ENCODE measurements at regions of chr20 and their contacts with region 1.

Region 1: DNA sequence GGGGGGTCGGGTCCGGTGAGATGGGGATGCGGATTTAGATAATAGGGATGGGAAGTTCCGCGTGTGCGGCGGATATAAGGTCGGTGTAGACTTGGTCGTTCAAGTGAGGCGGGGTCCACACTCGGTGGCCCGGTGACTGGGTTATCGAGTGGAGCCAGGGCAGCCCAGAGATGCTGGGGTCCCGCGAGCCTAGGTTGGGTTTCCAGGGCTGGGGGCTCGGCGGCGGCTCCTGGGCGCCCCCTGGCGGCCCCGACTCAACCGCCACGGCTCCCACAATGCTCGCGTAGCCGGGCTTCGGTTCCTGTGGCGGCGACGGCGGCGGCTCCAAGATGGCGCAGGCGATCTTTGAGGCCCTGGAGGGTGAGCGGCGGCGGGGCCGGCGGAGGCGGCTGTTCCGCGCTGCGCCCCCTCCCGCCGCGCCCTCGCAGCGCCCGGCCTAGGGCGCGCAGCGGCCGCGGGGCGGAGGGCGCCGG is at the start of gene ZNF341:
- DNase-seq: peak; percentile 76 to 95 (median 85)
- ATAC-seq: peak; percentile 80 to 88 (median 86)
- H3K4me3 ChIP-seq: peak within 1 kb of the TSS; percentile 57 to 62
- H3K4me3 Mint-ChIP-seq: peak within 1 kb of the TSS; percentile 89 to 90 (median 90)
- H3K27ac ChIP-seq: peak within 1 kb of the TSS; percentile 72
- H3K27ac Mint-ChIP-seq: peak within 1 kb of the TSS; percentile 94 to 96
- H3K4me1 ChIP-seq: peaks cover 5 to 26% of the 10 kb centered on the region in 2 experiments
- H3K4me1 Mint-ChIP-seq: peaks cover 25 to 26% (median 26%) of the 10 kb centered on the region in 3 donors
- H3K27me3 ChIP-seq: no peaks in the 10 kb centered on the region
- H3K27me3 Mint-ChIP-seq: no peaks in the 10 kb centered on the region
- total RNA-seq, gene ZNF341: 4.0 to 6.1 (median 5.6) TPM

Region 2: DNA sequence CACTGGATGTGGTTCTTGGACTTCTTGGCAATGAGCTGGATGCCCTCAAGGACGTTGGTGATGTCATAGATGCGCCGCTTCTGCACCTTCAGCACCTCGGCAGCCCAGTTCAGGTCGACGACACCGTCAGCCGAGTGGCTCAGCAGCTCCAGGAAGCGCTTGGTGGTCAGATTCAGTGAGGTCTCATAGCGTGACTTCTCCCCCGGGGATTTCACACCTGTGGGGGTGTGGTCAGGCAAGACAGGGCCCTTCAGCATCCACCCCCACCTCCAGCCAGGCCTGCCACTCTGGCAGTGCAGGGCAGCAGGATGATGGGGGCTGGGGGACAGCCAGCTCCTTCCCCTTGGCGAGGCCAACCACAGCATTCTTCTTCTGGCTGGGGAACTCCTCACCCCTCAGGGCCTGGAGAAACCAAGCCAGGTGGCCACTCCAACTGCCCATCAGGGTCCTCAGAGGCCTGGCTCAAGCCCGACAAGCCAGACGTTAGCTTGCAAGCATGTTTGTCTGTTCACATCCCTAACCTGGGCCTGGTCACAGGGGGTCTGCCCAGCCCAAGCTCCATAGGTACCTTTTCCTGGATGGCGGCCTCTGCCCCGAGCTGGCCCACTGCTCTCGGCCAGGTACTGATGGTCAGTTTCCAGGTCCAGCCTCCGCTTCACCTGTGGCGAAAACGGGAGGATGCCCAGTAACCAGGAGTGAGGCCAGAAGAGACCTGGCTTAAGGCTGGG is 51.8 kb before region 1 on chr20:
- CTCF ChIA-PET with region 1: no interaction called
- POLR2A ChIA-PET with region 1: no interaction called
- DNase-seq: peak in 18 of 35 experiments; percentile 11 to 72 (median 26)
- ATAC-seq: peak; percentile 43 to 72 (median 64)
- H3K4me3 ChIP-seq: no peak overlapping the region
- H3K4me3 Mint-ChIP-seq: peak overlapping the region in 1 of 3 donors; percentile 61
- H3K27ac ChIP-seq: peak overlapping the region; percentile 39
- H3K27ac Mint-ChIP-seq: peak overlapping the region; percentile 89 to 93
- H3K4me1 ChIP-seq: peaks cover 23 to 46% of the 10 kb centered on the region in 2 experiments
- H3K4me1 Mint-ChIP-seq: peaks cover 36 to 52% (median 48%) of the 10 kb centered on the region in 3 donors
- H3K27me3 ChIP-seq: no peaks in the 10 kb centered on the region
- H3K27me3 Mint-ChIP-seq: no peaks in the 10 kb centered on the region

Region 3: GRCh38 chr20:33719989-33720709 is 11.6 kb before region 1 on chr20 and contains the start of gene PXMP4:
- CTCF ChIA-PET with region 1: interaction called in 1 of 2 experiments, 12 read pairs
- POLR2A ChIA-PET with region 1: interaction called, 3 read pairs
- DNase-seq: peak; percentile 68 to 96 (median 87)
- ATAC-seq: peak; percentile 96 to 98 (median 97)
- H3K4me3 ChIP-seq: peak within 1 kb of the TSS; percentile 64 to 84
- H3K4me3 Mint-ChIP-seq: peak within 1 kb of the TSS; percentile 67 to 94 (median 85)
- H3K27ac ChIP-seq: peak within 1 kb of the TSS; percentile 61
- H3K27ac Mint-ChIP-seq: peak within 1 kb of the TSS; percentile 88 to 89
- H3K4me1 ChIP-seq: peaks cover 2 to 22% of the 10 kb centered on the region in 2 experiments
- H3K4me1 Mint-ChIP-seq: peaks cover 28 to 37% (median 30%) of the 10 kb centered on the region in 3 donors
- H3K27me3 ChIP-seq: no peaks in the 10 kb centered on the region
- H3K27me3 Mint-ChIP-seq: no peaks in the 10 kb centered on the region
- total RNA-seq, gene PXMP4: 6.1 to 15.4 (median 13.9) TPM

Region 4: GRCh38 chr20:33773412-33774089 is 41.8 kb after region 1 on chr20:
- CTCF ChIA-PET with region 1: no interaction called
- POLR2A ChIA-PET with region 1: no interaction called
- DNase-seq: no peak
- ATAC-seq: no peak
- H3K4me3 ChIP-seq: no peak overlapping the region
- H3K4me3 Mint-ChIP-seq: no peak overlapping the region
- H3K27ac ChIP-seq: no peak overlapping the region
- H3K27ac Mint-ChIP-seq: no peak overlapping the region
- H3K4me1 ChIP-seq: no peaks in the 10 kb centered on the region
- H3K4me1 Mint-ChIP-seq: peaks cover 0 to 5% (median under 1%) of the 10 kb centered on the region in 3 donors
- H3K27me3 ChIP-seq: no peaks in the 10 kb centered on the region
- H3K27me3 Mint-ChIP-seq: no peaks in the 10 kb centered on the region

Region 5: GRCh38 chr20:33826270-33826897 is 94.7 kb after region 1 on chr20:
- CTCF ChIA-PET with region 1: no interaction called
- POLR2A ChIA-PET with region 1: no interaction called
- DNase-seq: no peak
- ATAC-seq: no peak
- H3K4me3 ChIP-seq: no peak overlapping the region
- H3K4me3 Mint-ChIP-seq: peak overlapping the region in 1 of 3 donors; percentile 18
- H3K27ac ChIP-seq: no peak overlapping the region
- H3K27ac Mint-ChIP-seq: peak overlapping the region in 1 of 2 donors; percentile 66
- H3K4me1 ChIP-seq: peaks cover 4 to 40% of the 10 kb centered on the region in 2 experiments
- H3K4me1 Mint-ChIP-seq: peaks cover 68 to 78% (median 72%) of the 10 kb centered on the region in 3 donors
- H3K27me3 ChIP-seq: no peaks in the 10 kb centered on the region
- H3K27me3 Mint-ChIP-seq: no peaks in the 10 kb centered on the region